Esophagus muscularis mucosa (tissue), 4 donors: ENCODE measurements at regions of chr12 and their contacts with region 1.

Region 1: GRCh38 chr12:123232807-123233543 is at the starts of genes MPHOSPH9 and MTRFR:
- DNase-seq: peak; percentile 100
- H3K4me3 ChIP-seq: peak within 1 kb of the TSS; percentile 76 to 94 (median 82)
- H3K27ac ChIP-seq: peak within 1 kb of the TSS; percentile 88 to 93 (median 92)
- H3K4me1 ChIP-seq: peaks cover 28 to 64% (median 51%) of the 10 kb centered on the region in 4 donors
- H3K27me3 ChIP-seq: no peaks in the 10 kb centered on the region
- CTCF ChIP-seq: no peak
- EP300 ChIP-seq: no peak
- POLR2A ChIP-seq: peak; percentile 96
- total RNA-seq, gene MPHOSPH9: 14.2 to 25.3 (median 15.1) TPM
- total RNA-seq, gene MTRFR: 7.9 to 13.7 (median 9.2) TPM

Region 2: GRCh38 chr12:122980183-122981046 is 252.6 kb before region 1 on chr12 and contains the start of gene ARL6IP4:
- intact Hi-C with region 1: loop called (anchors 5 kb)
- DNase-seq: no peak
- H3K4me3 ChIP-seq: peak within 1 kb of the TSS; percentile 81 to 98 (median 92)
- H3K27ac ChIP-seq: peak within 1 kb of the TSS; percentile 89 to 96 (median 92)
- H3K4me1 ChIP-seq: peaks cover 77 to 95% (median 86%) of the 10 kb centered on the region in 4 donors
- H3K27me3 ChIP-seq: no peaks in the 10 kb centered on the region
- CTCF ChIP-seq: no peak
- EP300 ChIP-seq: no peak
- POLR2A ChIP-seq: peak; percentile 62
- total RNA-seq, gene ARL6IP4: 262 to 318 (median 288) TPM

Region 3: DNA sequence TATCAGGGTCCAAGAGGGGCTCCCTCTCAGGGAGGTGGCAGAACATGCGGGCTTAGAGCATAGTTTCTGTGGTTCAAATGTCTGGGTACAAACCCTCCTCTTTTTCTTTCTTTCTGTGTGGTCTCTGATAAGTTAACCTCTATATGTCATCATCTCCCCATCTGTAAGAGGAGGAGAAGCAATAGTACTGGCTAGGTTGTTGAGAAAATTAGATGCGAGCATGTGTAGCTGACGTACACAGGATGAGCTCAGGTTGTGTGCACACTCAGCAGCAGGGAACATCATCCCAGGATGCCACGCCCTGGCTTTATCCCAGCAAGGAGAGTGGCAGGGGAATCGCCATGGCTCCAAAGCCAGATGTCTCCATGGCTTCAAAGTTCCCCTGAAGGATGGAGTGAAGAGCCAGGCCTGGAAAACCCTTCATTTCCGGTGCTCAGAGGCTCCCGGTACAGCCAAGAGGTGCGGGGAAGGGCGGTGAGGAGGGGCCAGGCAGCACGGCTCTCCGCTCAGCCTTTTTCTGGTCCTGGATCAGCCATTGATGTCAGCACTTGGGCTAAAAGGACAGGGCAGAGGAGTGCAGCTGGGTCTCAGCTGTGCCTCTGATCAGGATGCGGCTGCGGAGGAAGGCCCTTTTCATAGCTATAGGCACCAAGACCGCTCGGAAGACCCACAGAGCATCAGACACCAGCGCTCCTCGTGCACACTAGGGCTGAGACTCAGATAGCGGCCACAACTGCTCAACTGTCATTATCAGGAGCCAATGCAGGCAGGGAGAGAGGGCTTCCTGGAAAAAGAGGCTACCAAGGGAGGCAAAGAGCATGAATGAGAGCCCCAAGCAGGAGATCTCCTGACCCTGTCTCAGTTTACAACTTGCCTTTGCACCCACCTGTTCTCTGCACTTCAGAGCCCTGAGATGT is 211.0 kb before region 1 on chr12:
- intact Hi-C with region 1: no loop called
- DNase-seq: no peak
- H3K4me3 ChIP-seq: no peak overlapping the region
- H3K27ac ChIP-seq: no peak overlapping the region
- H3K4me1 ChIP-seq: no peaks in the 10 kb centered on the region
- H3K27me3 ChIP-seq: no peaks in the 10 kb centered on the region
- CTCF ChIP-seq: no peak
- EP300 ChIP-seq: no peak
- POLR2A ChIP-seq: no peak

Region 4: DNA sequence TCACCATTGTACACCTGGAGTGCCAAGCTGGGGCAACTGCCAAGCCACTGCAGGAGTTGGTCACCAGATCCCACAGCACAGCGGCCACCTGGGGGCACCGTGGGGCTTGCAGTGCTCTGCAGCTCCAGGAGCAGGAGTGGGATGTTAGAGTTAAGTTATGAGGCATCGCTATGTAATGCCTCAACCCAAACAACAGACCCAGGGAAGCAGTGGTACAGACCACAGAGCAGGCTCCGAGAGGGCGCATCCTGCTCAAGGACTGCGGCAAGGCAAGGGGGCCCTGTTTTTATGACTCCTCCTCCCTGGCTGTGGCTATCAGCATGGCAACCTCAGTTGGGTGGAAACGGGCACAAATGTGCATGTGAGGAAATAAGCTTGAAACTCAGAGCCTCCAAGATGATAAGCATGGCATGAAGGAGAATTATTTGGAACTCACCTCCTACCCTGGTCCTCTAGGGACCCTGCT is 189.4 kb before region 1 on chr12:
- intact Hi-C with region 1: loop called (anchors 2 kb)
- DNase-seq: no peak
- H3K4me3 ChIP-seq: no peak overlapping the region
- H3K27ac ChIP-seq: peak overlapping the region; percentile 68 to 79 (median 76)
- H3K4me1 ChIP-seq: peaks cover 29 to 70% (median 48%) of the 10 kb centered on the region in 4 donors
- H3K27me3 ChIP-seq: no peaks in the 10 kb centered on the region
- CTCF ChIP-seq: peak; percentile 79 to 86 (median 81)
- EP300 ChIP-seq: no peak
- POLR2A ChIP-seq: no peak

Region 5: DNA sequence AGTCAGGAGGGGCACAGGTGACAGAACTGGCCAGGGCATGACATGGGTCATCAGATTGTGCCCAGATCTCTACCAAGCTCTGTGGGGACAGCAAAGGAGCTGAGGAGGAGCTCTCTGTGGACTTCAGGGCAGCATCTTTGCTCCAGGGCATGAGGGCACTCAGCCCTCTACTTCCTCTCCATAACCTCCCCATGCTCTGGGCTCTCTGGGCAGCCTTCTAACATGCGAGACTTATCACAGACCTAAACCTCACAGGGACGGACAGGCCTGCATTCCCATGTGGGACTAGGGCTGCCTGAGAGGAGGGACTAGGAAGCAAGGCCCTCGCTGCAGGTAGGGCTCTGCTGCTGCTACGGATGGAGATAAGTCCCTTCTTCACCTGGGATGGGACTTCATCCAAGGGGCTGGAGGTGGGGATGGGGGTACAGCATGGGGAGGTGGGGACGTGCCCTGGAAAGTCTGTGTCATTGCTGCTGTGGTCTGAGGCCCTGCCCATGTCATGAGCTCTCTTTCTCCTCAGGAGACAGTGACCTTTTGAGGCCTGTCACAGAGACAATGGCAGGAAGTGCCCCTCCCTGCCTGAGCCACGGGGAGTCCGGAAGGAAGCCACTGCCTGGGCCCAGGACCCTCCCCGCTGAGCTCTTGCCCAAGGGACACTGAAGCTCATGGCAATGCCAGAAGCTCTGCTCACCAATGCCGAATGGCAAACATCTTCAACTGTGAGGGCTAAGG is 126.2 kb before region 1 on chr12:
- intact Hi-C with region 1: no loop called
- DNase-seq: no peak
- H3K4me3 ChIP-seq: no peak overlapping the region
- H3K27ac ChIP-seq: peak overlapping the region; percentile 1 to 63 (median 34)
- H3K4me1 ChIP-seq: peaks cover 45 to 64% (median 61%) of the 10 kb centered on the region in 4 donors
- H3K27me3 ChIP-seq: no peaks in the 10 kb centered on the region
- CTCF ChIP-seq: no peak
- EP300 ChIP-seq: no peak
- POLR2A ChIP-seq: no peak

Region 6: DNA sequence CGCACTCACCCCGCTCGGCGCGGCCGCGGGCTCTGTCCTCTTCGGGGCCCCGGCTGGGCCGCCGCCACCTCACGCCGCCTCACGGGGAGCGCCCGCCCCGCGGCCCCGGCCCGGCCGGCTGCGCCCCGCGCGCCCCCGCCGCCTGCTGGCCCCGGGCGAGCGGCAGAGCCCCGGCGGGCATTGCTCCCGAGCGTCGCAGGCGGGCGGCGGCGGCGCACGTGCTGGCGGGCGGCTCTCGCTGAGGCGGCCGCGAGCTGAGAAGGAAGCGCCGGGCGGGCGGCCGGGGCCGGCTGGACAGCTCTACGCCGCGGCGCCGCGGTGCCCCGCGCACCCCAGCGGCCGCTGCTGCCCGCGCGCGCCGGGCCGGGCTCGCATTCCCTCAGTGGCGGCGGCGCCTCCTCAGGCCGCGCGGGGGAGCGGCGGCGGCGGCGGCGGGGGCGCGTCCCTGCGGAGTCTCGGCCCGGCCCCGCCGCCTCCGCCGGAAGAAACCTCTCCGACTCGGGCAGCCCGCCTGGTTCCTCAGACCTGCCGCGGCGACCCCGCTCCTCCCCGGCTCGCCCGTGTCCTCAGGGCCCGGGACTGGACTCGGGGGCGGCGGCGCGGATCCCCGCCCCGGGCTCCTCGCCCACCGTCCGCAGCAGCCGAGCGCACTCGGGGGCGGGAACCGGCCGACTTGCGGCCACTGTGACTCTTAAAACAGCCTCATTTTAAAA is 82.1 kb before region 1 on chr12 and contains the start of gene PITPNM2:
- intact Hi-C with region 1: loop called (anchors 5 kb)
- DNase-seq: no peak
- H3K4me3 ChIP-seq: peak within 1 kb of the TSS; percentile 68 to 88 (median 82)
- H3K27ac ChIP-seq: peak within 1 kb of the TSS; percentile 86 to 94 (median 91)
- H3K4me1 ChIP-seq: peaks cover 19 to 51% (median 34%) of the 10 kb centered on the region in 4 donors
- H3K27me3 ChIP-seq: no peaks in the 10 kb centered on the region
- CTCF ChIP-seq: peak; percentile 12 to 47 (median 47)
- EP300 ChIP-seq: no peak
- POLR2A ChIP-seq: no peak
- total RNA-seq, gene PITPNM2: 10.4 to 24.4 (median 13.3) TPM

Region 7: GRCh38 chr12:123180171-123180570 is 52.8 kb before region 1 on chr12:
- intact Hi-C with region 1: no loop called
- DNase-seq: no peak
- H3K4me3 ChIP-seq: no peak overlapping the region
- H3K27ac ChIP-seq: no peak overlapping the region
- H3K4me1 ChIP-seq: no peaks in the 10 kb centered on the region
- H3K27me3 ChIP-seq: no peaks in the 10 kb centered on the region
- CTCF ChIP-seq: no peak
- EP300 ChIP-seq: no peak
- POLR2A ChIP-seq: no peak

Region 8: GRCh38 chr12:123388177-123388947 is 155.4 kb after region 1 on chr12:
- intact Hi-C with region 1: no loop called
- DNase-seq: peak; percentile 94
- H3K4me3 ChIP-seq: peak overlapping the region; percentile 77 to 88 (median 77)
- H3K27ac ChIP-seq: peak overlapping the region; percentile 89 to 97 (median 94)
- H3K4me1 ChIP-seq: peaks cover 46 to 68% (median 65%) of the 10 kb centered on the region in 4 donors
- H3K27me3 ChIP-seq: no peaks in the 10 kb centered on the region
- CTCF ChIP-seq: peak in 2 of 3 experiments; percentile 6 to 9
- EP300 ChIP-seq: no peak
- POLR2A ChIP-seq: no peak